A549 (cell line): ENCODE measurements at regions of chr3 and their contacts with region 1.

Region 1: DNA sequence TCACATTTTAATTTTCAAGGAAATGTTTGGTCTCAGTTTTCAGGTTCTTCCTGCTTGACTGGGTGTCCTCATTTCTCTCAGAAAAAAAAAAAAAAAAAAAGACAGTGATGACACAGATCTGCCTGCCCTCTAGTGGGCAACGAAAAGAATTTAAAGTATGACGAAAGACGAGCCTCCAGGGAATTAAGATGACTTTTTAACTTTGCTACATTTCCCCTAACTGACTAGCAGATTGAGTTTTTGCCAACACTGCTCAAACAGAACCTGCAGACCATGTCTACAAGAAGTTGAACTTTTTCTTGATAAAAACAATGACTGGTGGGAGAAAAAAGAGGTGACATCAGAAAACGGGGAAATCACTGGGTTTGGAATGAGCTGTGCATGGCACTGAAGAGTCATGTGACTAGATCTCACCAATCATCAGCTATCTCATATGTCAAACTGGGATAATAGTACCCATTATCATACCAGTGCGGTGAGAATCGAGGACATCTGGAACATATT is 40.8 kb downstream of the EOMES start:
- DNase-seq: peak; percentile 80 to 85
- ATAC-seq: peak; percentile 84 to 89
- H3K4me3 ChIP-seq: peak overlapping the region; percentile 35; the same call in 2 of the 3 replicates
- H3K27ac ChIP-seq: peak overlapping the region; percentile 76 to 86
- H3K4me1 ChIP-seq: peaks cover 31% of the 10 kb centered on the region
- CTCF ChIP-seq: peak; percentile 93
- EP300 ChIP-seq: no peak
- POLR2A ChIP-seq: no peak
- RAD21 ChIP-seq: peak; percentile 84 to 92

Region 2: DNA sequence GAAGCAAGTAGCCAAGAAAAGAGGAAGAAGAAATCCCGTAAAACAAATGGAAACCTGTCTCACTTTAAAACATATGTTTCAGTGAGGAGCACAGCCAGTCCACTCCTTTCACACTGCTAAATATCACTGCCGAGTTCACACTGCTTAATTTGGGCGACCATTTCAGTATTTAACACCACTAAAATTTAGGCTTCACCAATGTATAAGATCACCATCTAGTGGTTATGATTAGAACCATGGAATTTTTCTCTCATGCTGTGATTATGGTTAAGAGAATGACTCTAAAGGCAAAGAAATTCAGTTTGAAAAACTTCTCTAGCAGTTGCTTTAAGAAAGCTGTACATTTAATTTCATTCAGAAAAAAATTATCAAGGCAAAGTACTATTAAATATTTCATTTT is 213.8 kb before region 1 on chr3:
- CTCF ChIA-PET with region 1: interaction called, 33 read pairs
- POLR2A ChIA-PET with region 1: no interaction called
- DNase-seq: peak; percentile 57 to 60
- ATAC-seq: peak; percentile 82
- H3K4me3 ChIP-seq: no peak overlapping the region
- H3K27ac ChIP-seq: peak overlapping the region in 1 of 2 experiments; percentile 64; a peak in 2 of 6 replicates
- H3K4me1 ChIP-seq: peaks cover 18% of the 10 kb centered on the region; the same call in 2 of the 3 replicates
- CTCF ChIP-seq: peak; percentile 74
- EP300 ChIP-seq: no peak
- POLR2A ChIP-seq: no peak
- RAD21 ChIP-seq: peak; percentile 75 to 79

Region 3: GRCh38 chr3:27521179-27521871 is 160.0 kb before region 1 on chr3:
- CTCF ChIA-PET with region 1: interaction called, 31 read pairs
- POLR2A ChIA-PET with region 1: no interaction called
- DNase-seq: peak; percentile 77 to 93
- ATAC-seq: peak; percentile 89 to 95
- H3K4me3 ChIP-seq: no peak overlapping the region
- H3K27ac ChIP-seq: peak overlapping the region; percentile 58 to 90
- H3K4me1 ChIP-seq: peaks cover 59% of the 10 kb centered on the region
- CTCF ChIP-seq: no peak
- EP300 ChIP-seq: peak; percentile 60 to 76; a peak in 3 of 5 replicates
- POLR2A ChIP-seq: no peak
- RAD21 ChIP-seq: no peak

Region 4: DNA sequence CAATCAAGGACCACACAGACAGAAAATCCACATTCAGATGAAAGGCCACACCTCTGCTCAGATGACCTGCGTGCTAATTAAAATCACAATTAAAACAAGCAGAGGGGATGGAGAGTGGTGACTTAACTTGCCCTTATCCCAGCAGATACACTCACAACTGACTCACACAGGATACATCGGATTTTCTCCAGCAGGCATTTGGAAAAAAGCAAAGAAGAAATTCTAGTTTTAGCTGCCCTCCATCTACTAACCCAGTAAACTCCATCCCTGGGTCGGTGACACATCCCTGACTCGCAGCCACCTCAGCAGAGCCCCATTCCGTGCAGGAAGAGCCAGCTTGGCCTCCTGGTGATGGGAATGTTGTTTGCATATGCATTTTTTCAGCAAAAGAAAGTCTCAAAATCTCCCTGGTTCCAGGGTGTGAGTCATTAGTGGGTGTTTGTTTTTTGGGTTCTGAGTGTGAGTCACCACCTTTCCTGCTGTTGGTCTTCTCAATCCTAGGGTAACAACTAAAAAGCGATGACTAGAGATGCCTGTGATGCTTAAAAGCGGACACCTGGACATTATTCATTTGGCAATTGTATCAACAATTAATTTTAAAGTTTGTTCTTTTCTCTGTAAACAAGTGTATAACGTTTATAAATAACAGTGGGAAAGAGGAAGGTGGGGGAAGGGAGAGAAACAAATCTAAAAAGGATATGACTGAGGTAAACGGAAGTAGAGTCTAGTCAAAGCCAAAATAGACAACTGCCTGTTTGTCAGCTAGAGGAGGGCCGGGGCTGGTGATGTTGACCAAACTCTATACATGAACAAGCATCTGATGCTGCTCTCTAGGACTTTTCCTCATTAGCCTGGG is 147.4 kb before region 1 on chr3:
- CTCF ChIA-PET with region 1: interaction called, 31 read pairs
- POLR2A ChIA-PET with region 1: interaction called, 9 read pairs
- DNase-seq: peak; percentile 95 to 98
- ATAC-seq: peak; percentile 95 to 96
- H3K4me3 ChIP-seq: peak overlapping the region; percentile 21; the same call in 1 of the 3 replicates
- H3K27ac ChIP-seq: peak overlapping the region; percentile 93 to 95
- H3K4me1 ChIP-seq: peaks cover 42% of the 10 kb centered on the region
- CTCF ChIP-seq: no peak
- EP300 ChIP-seq: peak; percentile 88 to 97; a peak in 4 of 5 replicates
- POLR2A ChIP-seq: no peak
- RAD21 ChIP-seq: peak; percentile 66 to 68

Region 5: GRCh38 chr3:27659279-27660021 is 21.8 kb before region 1 on chr3:
- CTCF ChIA-PET with region 1: interaction called, 11 read pairs
- POLR2A ChIA-PET with region 1: interaction called, 3 read pairs
- DNase-seq: peak; percentile 77 to 83
- ATAC-seq: peak; percentile 86 to 95
- H3K4me3 ChIP-seq: no peak overlapping the region
- H3K27ac ChIP-seq: peak overlapping the region in 1 of 2 experiments; percentile 53; a peak in 3 of 6 replicates
- H3K4me1 ChIP-seq: peaks cover 17% of the 10 kb centered on the region; the same call in 2 of the 3 replicates
- CTCF ChIP-seq: peak; percentile 62
- EP300 ChIP-seq: no peak
- POLR2A ChIP-seq: no peak
- RAD21 ChIP-seq: peak; percentile 66 to 71

Region 6: DNA sequence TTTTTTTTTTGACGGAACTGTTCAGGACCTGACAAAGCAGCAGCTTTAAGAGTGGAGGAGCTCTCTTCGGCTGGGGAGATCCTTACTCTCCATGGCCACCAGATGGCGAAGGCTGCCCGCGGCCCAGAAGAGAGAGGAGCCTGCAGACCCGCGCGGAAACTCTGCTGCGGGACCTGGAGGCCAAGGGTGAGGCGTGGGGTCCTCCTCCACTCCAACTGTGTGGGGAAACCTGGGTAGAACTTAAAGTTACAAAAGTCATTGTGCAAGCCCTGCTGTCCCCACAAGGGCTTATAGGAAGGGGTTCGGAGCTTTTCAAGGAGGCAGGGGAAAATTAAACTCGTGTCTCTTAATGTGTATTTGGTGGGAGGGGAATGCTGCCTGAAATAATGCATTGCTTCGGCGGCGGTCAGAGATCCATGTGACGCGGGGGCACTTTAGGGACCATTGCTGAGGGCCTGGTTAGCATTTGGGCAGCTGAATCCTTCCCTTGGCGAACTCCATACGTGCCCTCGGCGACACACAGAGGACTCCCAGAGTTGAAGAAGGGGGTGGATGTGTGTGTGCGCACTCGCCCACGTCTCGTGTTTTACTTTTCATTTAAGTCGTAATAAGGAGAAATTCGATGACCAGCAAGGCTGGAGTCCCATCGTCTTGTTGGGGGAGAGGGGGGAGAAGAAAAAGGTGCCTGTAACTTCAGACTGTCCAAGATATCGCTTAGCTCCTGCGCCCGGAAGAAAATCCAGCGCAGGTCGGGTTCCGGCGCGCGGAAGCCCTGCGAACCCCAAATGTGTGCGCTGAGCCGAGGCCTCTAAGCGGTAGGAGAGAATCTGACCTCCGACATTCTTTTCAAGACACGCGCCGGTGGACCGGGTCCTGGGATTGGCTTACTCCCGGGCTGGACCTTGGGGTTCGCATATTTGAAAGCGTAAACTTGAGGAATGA is 31.1 kb after region 1 on chr3:
- CTCF ChIA-PET with region 1: interaction called, 11 read pairs
- POLR2A ChIA-PET with region 1: no interaction called
- DNase-seq: peak; percentile 85 to 96
- ATAC-seq: peak; percentile 94 to 98
- H3K4me3 ChIP-seq: peak overlapping the region; percentile 53
- H3K27ac ChIP-seq: peak overlapping the region; percentile 54 to 77; a peak in 5 of 6 replicates
- H3K4me1 ChIP-seq: peaks cover 17% of the 10 kb centered on the region; the same call in 2 of the 3 replicates
- CTCF ChIP-seq: peak; percentile 79
- EP300 ChIP-seq: no peak
- POLR2A ChIP-seq: no peak
- RAD21 ChIP-seq: peak; percentile 77 to 81

Region 7: DNA sequence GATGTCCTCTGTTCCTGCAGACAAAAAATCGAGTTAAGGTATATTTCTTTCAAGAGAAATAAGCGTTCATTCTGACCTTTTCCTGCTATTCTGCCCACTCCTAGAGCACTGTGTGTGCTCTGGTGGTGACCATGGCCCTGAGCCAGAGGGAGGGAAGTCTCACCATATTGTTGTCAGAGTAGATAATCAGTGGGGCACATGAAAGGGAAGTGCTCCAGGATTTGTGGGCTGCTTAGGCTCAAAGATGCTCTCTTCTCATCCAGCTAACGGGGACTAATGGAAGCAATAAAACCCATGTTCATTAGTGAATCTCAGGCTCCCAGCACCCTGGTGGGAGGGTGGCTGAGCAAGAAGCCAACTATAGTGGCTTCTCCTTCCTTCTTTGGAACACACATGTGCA is 111.6 kb after region 1 on chr3:
- CTCF ChIA-PET with region 1: no interaction called
- POLR2A ChIA-PET with region 1: no interaction called
- DNase-seq: no peak
- ATAC-seq: no peak
- H3K4me3 ChIP-seq: no peak overlapping the region
- H3K27ac ChIP-seq: no peak overlapping the region
- H3K4me1 ChIP-seq: no peaks in the 10 kb centered on the region
- CTCF ChIP-seq: no peak
- EP300 ChIP-seq: no peak
- POLR2A ChIP-seq: no peak
- RAD21 ChIP-seq: no peak